Sigmoid colon (tissue), 7 donors: ENCODE measurements at regions of chr7 and their contacts with region 1.

Region 1: DNA sequence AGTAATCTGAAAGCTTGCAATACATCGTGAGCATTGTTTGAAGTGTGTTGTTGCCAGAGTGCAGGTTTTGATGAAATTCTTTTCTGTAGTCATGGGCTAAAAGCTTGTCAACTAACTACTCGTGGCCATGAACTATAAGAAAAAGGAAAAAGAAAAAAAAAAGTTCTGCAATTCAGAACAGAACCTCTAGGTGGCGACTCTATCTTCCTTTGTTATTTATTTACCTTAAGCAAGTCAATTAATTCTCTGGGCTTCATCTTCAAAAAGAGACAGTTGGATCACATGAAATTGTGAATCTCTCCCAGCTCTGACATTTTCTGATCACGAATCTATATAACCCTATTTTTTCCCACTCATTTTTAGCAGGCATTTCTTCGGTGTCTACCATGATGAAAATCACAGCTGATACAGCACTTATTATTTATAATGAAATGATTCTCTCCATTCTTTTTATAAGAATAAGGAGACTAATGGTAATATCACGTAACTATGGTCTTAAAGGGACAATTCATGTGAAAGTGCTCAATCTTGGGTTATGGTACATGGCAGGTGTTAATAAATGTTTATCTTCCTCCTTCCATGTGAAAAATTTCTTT is 18.8 kb downstream of the TMEM196 start:
- DNase-seq: no peak
- H3K4me3 ChIP-seq: no peak overlapping the region
- H3K27ac ChIP-seq: no peak overlapping the region
- H3K4me1 ChIP-seq: no peaks in the 10 kb centered on the region
- H3K27me3 ChIP-seq: no peaks in the 10 kb centered on the region
- CTCF ChIP-seq: peak in 3 of 4 experiments; percentile 23 to 62 (median 30)
- EP300 ChIP-seq: no peak
- POLR2A ChIP-seq: no peak

Region 2: GRCh38 chr7:20172736-20173334 is 418.2 kb after region 1 on chr7:
- intact Hi-C with region 1: loop called (anchors 5 kb)
- DNase-seq: peak; percentile 88
- H3K4me3 ChIP-seq: no peak overlapping the region
- H3K27ac ChIP-seq: no peak overlapping the region
- H3K4me1 ChIP-seq: peaks cover 0 to 5% (median 0%) of the 10 kb centered on the region in 4 donors
- H3K27me3 ChIP-seq: no peaks in the 10 kb centered on the region
- CTCF ChIP-seq: peak; percentile 40 to 72 (median 62)
- EP300 ChIP-seq: no peak
- POLR2A ChIP-seq: no peak

Region 3: GRCh38 chr7:20310963-20311742 is 556.5 kb after region 1 on chr7:
- intact Hi-C with region 1: loop called (anchors 10 kb)
- DNase-seq: no peak
- H3K4me3 ChIP-seq: no peak overlapping the region
- H3K27ac ChIP-seq: no peak overlapping the region
- H3K4me1 ChIP-seq: no peaks in the 10 kb centered on the region
- H3K27me3 ChIP-seq: no peaks in the 10 kb centered on the region
- CTCF ChIP-seq: peak in 2 of 4 experiments; percentile 15 to 24
- EP300 ChIP-seq: no peak
- POLR2A ChIP-seq: no peak